ENCODE measurements at regions of chr20 and their contacts with region 1.

Region 1: DNA sequence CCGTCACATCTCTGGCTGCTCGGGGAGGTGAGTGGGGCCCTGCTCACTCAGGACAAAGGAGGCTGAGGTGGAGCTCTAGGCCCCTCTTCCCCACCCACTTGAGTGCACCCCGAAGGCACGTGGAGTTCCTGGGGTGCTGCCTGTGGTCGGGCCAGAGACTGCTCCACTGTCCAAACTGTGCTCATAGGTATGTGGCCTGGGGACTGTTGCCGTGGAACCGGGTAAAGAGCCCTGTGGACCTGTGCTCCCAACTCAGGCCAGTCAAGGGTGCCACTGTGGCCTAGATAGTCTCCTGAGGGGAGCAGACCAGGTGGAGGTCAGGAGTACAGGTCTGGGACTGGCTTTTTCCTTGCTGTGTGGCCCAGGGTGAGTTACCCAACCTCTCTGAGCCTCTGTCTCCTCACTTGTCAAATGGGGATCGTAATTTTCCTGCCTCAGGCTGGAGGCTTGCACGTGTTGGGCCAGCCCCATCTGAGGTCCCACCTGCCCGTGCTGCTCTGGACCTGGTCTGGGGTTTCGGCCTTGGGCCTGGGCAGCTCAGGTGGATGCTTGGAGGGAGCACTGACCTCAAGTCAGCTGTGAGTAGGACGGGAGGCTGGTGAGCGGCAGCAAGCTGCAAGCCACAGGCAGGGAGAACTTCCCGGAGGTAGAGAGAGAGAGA is 12.4 kb upstream of the NPBWR2 start:
- DNase-seq: no peak
- ATAC-seq: peak; percentile 51
- H3K4me3 ChIP-seq: no peak overlapping the region
- H3K27ac ChIP-seq: no peak overlapping the region
- H3K4me1 ChIP-seq: peaks cover 5% of the 10 kb centered on the region
- H3K27me3 ChIP-seq: no peaks in the 10 kb centered on the region; a peak in 1 of 4 replicates
- CTCF ChIP-seq: no peak
- EP300 ChIP-seq: no peak
- POLR2A ChIP-seq: no peak
- RAD21 ChIP-seq: no peak

Region 2: GRCh38 chr20:63980806-63981728 is 138.7 kb before region 1 on chr20 and contains the start of gene PRPF6:
- CTCF ChIA-PET with region 1: interaction called, 12 read pairs
- POLR2A ChIA-PET with region 1: no interaction called
- RAD21 ChIA-PET with region 1: interaction called, 4 read pairs
- SMC1A ChIA-PET with region 1: no interaction called
- in situ Hi-C with region 1: no loop called
- intact Hi-C with region 1: no loop called
- DNase-seq: peak; percentile 83
- ATAC-seq: peak; percentile 68
- H3K4me3 ChIP-seq: peak within 1 kb of the TSS; percentile 96
- H3K27ac ChIP-seq: peak within 1 kb of the TSS; percentile 92
- H3K4me1 ChIP-seq: peaks cover 23% of the 10 kb centered on the region
- H3K27me3 ChIP-seq: no peaks in the 10 kb centered on the region
- CTCF ChIP-seq: peak; percentile 83 to 97 (median 88)
- EP300 ChIP-seq: no peak
- POLR2A ChIP-seq: peak; percentile 89
- RAD21 ChIP-seq: peak; percentile 57
- polyA plus RNA-seq, gene PRPF6: 5.0 to 10.7 TPM

Region 3: GRCh38 chr20:64053841-64054661 is 65.8 kb before region 1 on chr20:
- CTCF ChIA-PET with region 1: interaction called, 16 read pairs
- POLR2A ChIA-PET with region 1: no interaction called
- RAD21 ChIA-PET with region 1: interaction called, 4 read pairs
- SMC1A ChIA-PET with region 1: no interaction called
- in situ Hi-C with region 1: no loop called
- intact Hi-C with region 1: no loop called
- DNase-seq: no peak
- ATAC-seq: peak; percentile 41
- H3K4me3 ChIP-seq: no peak overlapping the region
- H3K27ac ChIP-seq: no peak overlapping the region
- H3K4me1 ChIP-seq: peaks cover 48% of the 10 kb centered on the region
- H3K27me3 ChIP-seq: peaks cover 3 to 8% of the 10 kb centered on the region in 2 experiments; a peak in 3 of 4 replicates
- CTCF ChIP-seq: peak; percentile 44 to 54 (median 47); a peak in 4 of 6 replicates
- EP300 ChIP-seq: no peak
- POLR2A ChIP-seq: no peak
- RAD21 ChIP-seq: peak; percentile 49; the same call in 1 of the 2 replicates

Region 4: DNA sequence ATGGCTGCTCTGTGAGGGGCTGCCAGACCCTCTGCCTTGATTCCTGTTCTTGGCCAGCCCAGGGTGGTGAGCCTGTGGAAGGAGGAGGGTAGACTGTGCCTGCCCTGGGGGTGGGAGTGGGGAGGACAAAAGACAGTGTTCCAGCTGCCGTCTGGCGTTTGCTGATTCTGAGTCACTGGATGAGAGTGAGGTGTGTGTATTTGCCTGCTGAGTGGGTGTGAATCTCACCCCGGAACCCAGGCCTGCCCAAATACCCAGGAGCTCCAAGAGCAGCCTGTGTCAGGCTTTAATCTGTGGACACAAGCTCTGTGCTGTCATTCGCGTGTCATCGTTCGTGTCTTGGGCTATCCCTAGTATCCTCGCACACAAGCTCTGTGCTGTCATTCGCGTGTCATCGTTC is 33.0 kb before region 1 on chr20:
- CTCF ChIA-PET with region 1: interaction called, 65 read pairs
- POLR2A ChIA-PET with region 1: interaction called, 12 read pairs
- RAD21 ChIA-PET with region 1: interaction called, 67 read pairs
- SMC1A ChIA-PET with region 1: interaction called, 13 read pairs
- in situ Hi-C with region 1: no loop called
- intact Hi-C with region 1: loop called (anchors 1 kb)
- DNase-seq: no peak
- ATAC-seq: no peak
- H3K4me3 ChIP-seq: no peak overlapping the region
- H3K27ac ChIP-seq: no peak overlapping the region
- H3K4me1 ChIP-seq: peaks cover 7% of the 10 kb centered on the region
- H3K27me3 ChIP-seq: peaks cover 2 to 7% of the 10 kb centered on the region in 2 experiments; a peak in 2 of 4 replicates
- CTCF ChIP-seq: no peak
- EP300 ChIP-seq: no peak
- POLR2A ChIP-seq: no peak
- RAD21 ChIP-seq: no peak

Region 5: GRCh38 chr20:64106981-64107735 is 12.7 kb before region 1 on chr20 and contains the start of gene NPBWR2:
- CTCF ChIA-PET with region 1: interaction called, 23 read pairs
- POLR2A ChIA-PET with region 1: interaction called, 6 read pairs
- RAD21 ChIA-PET with region 1: interaction called, 10 read pairs
- SMC1A ChIA-PET with region 1: interaction called, 5 read pairs
- in situ Hi-C with region 1: no loop called
- intact Hi-C with region 1: no loop called
- DNase-seq: no peak
- ATAC-seq: peak; percentile 54
- H3K4me3 ChIP-seq: no peak within 1 kb of the TSS
- H3K27ac ChIP-seq: no peak within 1 kb of the TSS
- H3K4me1 ChIP-seq: no peaks in the 10 kb centered on the region; the same call in 1 of the 2 replicates
- H3K27me3 ChIP-seq: no peaks in the 10 kb centered on the region; a peak in 2 of 4 replicates
- CTCF ChIP-seq: no peak
- EP300 ChIP-seq: no peak
- POLR2A ChIP-seq: no peak
- RAD21 ChIP-seq: no peak
- polyA plus RNA-seq, gene NPBWR2: not detected

Measured in GM12878 (cell line).